ENCODE measurements at regions of chr11 and their contacts with region 1.

Region 1: GRCh38 chr11:122796128-122796717 is 42.1 kb upstream of the CRTAM start:
- DNase-seq: peak; percentile 55 to 85 (median 75)
- ATAC-seq: peak; percentile 100
- H3K4me3 ChIP-seq: no peak overlapping the region
- H3K4me3 Mint-ChIP-seq: no peak overlapping the region
- H3K27ac ChIP-seq: no peak overlapping the region
- H3K27ac Mint-ChIP-seq: no peak overlapping the region
- H3K4me1 ChIP-seq: no peaks in the 10 kb centered on the region
- H3K4me1 Mint-ChIP-seq: peaks cover 4% of the 10 kb centered on the region
- H3K27me3 ChIP-seq: no peaks in the 10 kb centered on the region
- H3K27me3 Mint-ChIP-seq: no peaks in the 10 kb centered on the region
- CTCF ChIP-seq: peak; percentile 96

Region 2: DNA sequence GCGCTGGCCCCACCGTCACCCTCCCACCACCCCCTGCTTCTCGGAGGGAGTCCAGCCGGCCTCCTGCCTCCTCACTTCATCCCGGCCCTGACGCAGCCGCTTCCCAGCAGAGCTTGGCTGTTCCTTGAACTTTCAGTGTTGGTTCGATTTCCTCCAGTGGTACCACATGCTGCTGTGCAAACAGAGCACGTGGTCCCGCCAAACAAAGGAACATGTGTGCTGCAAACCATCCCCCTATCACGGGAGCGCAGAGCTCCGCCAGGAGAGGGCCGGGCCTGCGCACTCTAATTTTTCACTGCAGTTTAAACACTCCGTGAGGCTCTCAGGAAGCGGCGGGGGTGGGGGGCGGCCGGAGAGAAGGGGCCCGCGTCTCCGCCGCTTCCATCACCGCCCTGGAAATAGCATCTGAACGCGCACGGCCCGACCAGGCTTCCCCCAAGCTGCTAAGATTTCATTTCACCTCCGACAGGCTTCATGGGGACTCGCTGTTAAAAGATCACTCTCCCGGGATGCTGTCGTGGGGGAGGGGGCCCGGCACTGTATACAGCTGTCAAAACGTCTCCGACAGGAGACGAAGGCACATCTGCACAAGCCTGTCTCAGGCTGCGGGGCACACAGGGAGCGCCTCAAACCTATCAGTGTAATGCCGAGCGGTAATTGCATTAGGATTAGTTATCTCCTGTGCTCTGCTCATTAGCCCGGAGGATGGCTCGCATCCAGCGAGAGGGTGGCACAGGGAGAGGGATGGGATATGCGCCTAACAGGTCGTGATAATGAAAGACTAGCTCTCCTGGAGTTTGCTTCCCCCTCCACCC is 1073.6 kb before region 1 on chr11:
- CTCF ChIA-PET with region 1: no interaction called
- POLR2A ChIA-PET with region 1: no interaction called
- intact Hi-C with region 1: no loop called
- DNase-seq: no peak
- ATAC-seq: no peak
- H3K4me3 ChIP-seq: no peak overlapping the region
- H3K4me3 Mint-ChIP-seq: no peak overlapping the region
- H3K27ac ChIP-seq: no peak overlapping the region
- H3K27ac Mint-ChIP-seq: no peak overlapping the region
- H3K4me1 ChIP-seq: peaks cover 5% of the 10 kb centered on the region
- H3K4me1 Mint-ChIP-seq: no peaks in the 10 kb centered on the region
- H3K27me3 ChIP-seq: peaks cover 0 to 5% of the 10 kb centered on the region in 2 experiments
- H3K27me3 Mint-ChIP-seq: peaks cover 15% of the 10 kb centered on the region
- CTCF ChIP-seq: no peak

Region 3: GRCh38 chr11:122781378-122782195 is 14.6 kb before region 1 on chr11:
- CTCF ChIA-PET with region 1: interaction called, 26 read pairs
- POLR2A ChIA-PET with region 1: no interaction called
- intact Hi-C with region 1: no loop called
- DNase-seq: peak; percentile 48 to 85 (median 76)
- ATAC-seq: peak; percentile 86
- H3K4me3 ChIP-seq: no peak overlapping the region
- H3K4me3 Mint-ChIP-seq: no peak overlapping the region
- H3K27ac ChIP-seq: no peak overlapping the region
- H3K27ac Mint-ChIP-seq: no peak overlapping the region
- H3K4me1 ChIP-seq: no peaks in the 10 kb centered on the region
- H3K4me1 Mint-ChIP-seq: peaks cover 2% of the 10 kb centered on the region
- H3K27me3 ChIP-seq: no peaks in the 10 kb centered on the region
- H3K27me3 Mint-ChIP-seq: no peaks in the 10 kb centered on the region
- CTCF ChIP-seq: peak; percentile 88

Region 4: DNA sequence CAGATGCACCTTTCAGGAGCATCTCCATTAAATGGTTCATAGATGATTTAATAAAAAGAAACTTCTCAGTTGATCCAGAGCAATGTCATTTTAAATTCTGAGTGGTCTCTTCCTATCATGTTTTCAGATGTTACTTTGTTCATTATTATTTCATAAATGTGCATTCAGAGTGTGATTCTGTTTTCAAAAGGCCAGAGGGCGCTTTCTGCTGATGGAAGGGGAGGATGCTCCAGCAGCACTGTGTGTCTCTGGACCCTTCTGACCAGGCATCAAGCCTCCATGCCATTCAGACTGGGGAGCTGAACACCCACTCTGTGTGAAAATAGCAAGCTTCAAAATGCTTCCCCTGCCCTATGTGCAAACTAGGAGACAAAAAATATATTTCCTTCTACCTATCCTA is 18.2 kb after region 1 on chr11:
- CTCF ChIA-PET with region 1: interaction called, 38 read pairs
- POLR2A ChIA-PET with region 1: no interaction called
- intact Hi-C with region 1: no loop called
- DNase-seq: peak in 3 of 9 experiments; percentile 10 to 57 (median 44)
- ATAC-seq: no peak
- H3K4me3 ChIP-seq: no peak overlapping the region
- H3K4me3 Mint-ChIP-seq: no peak overlapping the region
- H3K27ac ChIP-seq: no peak overlapping the region
- H3K27ac Mint-ChIP-seq: no peak overlapping the region
- H3K4me1 ChIP-seq: peaks cover 27% of the 10 kb centered on the region
- H3K4me1 Mint-ChIP-seq: peaks cover 49% of the 10 kb centered on the region
- H3K27me3 ChIP-seq: no peaks in the 10 kb centered on the region
- H3K27me3 Mint-ChIP-seq: no peaks in the 10 kb centered on the region
- CTCF ChIP-seq: peak; percentile 25

Region 5: DNA sequence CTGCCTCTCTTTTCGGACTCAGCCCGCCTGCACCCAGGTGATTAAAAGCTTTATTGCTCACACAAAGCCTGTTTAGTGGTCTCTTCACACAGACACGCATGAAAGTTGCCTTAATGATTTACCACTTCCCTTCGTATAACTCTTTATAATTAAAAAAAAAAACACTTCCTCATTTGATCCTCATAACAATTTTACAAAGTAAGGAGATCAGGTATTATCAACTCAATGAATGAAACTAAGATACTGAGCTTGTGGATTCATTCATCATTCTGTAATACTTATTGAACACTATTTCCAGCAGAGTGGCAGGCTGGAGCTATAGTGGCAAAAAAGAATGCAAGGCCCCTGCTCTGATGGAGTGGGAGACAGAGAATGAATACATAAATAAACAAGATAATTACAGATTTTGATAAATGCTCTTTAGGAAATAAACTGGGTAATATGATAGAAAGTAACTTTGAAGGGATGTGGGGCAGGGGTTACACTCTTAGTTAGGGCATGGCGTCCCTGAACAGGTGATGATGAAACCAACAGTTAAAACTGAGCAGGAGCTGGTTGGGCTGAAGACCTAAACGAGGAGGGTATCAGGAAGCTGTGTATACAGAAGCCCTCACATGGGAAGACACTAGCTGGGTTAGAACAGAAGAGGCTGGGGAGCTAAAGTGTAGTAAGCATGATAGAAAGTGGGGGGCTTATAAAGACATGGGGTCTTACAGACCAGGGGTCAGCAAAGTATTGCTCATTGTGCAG is 36.7 kb after region 1 on chr11:
- CTCF ChIA-PET with region 1: interaction called, 15 read pairs
- POLR2A ChIA-PET with region 1: interaction called, 6 read pairs
- intact Hi-C with region 1: loop called in 1 of 2 experiments (anchors 1 kb)
- DNase-seq: peak in 1 of 9 experiments; percentile 44
- ATAC-seq: peak; percentile 46
- H3K4me3 ChIP-seq: no peak overlapping the region
- H3K4me3 Mint-ChIP-seq: peak overlapping the region; percentile 12
- H3K27ac ChIP-seq: peak overlapping the region; percentile 7 to 42
- H3K27ac Mint-ChIP-seq: peak overlapping the region; percentile 70
- H3K4me1 ChIP-seq: peaks cover 15% of the 10 kb centered on the region
- H3K4me1 Mint-ChIP-seq: peaks cover 43% of the 10 kb centered on the region
- H3K27me3 ChIP-seq: no peaks in the 10 kb centered on the region
- H3K27me3 Mint-ChIP-seq: no peaks in the 10 kb centered on the region
- CTCF ChIP-seq: no peak

Region 6: DNA sequence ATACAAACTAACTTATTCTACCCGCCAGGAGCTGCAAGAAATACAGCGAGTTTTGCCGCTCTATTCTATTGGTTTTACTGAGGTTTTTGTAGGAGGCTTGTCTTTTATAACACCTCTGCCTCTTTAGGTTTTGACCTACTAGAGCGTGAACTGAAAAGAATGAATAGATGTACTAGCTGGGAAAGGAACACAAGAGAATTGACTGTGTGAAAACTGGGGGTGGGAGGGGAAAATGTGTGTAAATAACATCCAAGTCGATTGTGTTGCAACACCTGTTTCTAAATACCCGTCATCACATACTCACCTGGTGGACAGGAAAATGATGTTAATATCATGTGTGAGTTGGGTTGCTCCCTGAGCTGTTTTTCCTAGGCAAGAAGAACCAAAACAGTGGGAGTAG is 73.4 kb after region 1 on chr11:
- CTCF ChIA-PET with region 1: interaction called, 39 read pairs
- POLR2A ChIA-PET with region 1: no interaction called
- intact Hi-C with region 1: no loop called
- DNase-seq: no peak
- ATAC-seq: no peak
- H3K4me3 ChIP-seq: no peak overlapping the region
- H3K4me3 Mint-ChIP-seq: no peak overlapping the region
- H3K27ac ChIP-seq: no peak overlapping the region
- H3K27ac Mint-ChIP-seq: peak overlapping the region; percentile 66
- H3K4me1 ChIP-seq: no peaks in the 10 kb centered on the region
- H3K4me1 Mint-ChIP-seq: no peaks in the 10 kb centered on the region
- H3K27me3 ChIP-seq: no peaks in the 10 kb centered on the region
- H3K27me3 Mint-ChIP-seq: no peaks in the 10 kb centered on the region
- CTCF ChIP-seq: no peak

Region 7: DNA sequence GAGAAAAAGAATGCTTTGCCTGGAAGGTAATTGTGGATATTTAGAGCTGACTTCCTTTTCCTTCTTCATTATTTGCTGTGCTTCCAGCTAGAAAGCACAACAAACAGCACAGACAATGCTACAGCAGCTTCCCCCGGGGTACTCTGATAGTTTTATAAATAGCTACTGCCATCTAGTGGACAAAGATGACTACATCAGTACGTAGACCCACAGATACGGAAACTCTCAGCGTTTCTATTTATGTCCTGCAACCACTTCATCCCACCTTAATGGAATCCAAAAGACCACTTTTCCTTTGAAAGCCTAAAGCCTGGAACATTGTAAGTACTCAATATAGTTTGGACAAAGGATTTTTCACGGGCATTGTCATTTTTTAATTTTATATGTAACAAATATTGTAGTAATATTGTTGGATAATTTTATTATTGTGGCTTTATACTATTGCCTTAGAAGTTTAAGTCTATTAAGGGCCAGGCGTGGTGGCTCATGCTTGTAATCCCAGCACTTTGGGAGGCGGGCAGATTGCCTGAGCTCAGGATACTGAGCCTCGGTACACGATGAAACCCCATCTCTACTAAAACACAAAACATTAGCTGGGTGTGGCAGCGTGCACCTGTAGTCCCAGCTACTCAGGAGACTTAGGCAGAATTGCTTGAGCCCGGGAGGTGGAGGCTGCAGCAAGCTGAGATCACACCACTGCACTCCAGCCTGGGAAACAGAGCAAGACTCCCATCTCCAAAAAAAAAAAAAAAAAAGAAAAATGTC is 258.3 kb after region 1 on chr11:
- CTCF ChIA-PET with region 1: interaction called, 15 read pairs
- POLR2A ChIA-PET with region 1: no interaction called
- intact Hi-C with region 1: loop called (anchors 1 to 10 kb)
- DNase-seq: peak in 4 of 9 experiments; percentile 28 to 84 (median 56)
- ATAC-seq: peak; percentile 85
- H3K4me3 ChIP-seq: no peak overlapping the region
- H3K4me3 Mint-ChIP-seq: peak overlapping the region; percentile 67
- H3K27ac ChIP-seq: peak overlapping the region in 1 of 2 experiments; percentile 51
- H3K27ac Mint-ChIP-seq: peak overlapping the region; percentile 97
- H3K4me1 ChIP-seq: peaks cover 55% of the 10 kb centered on the region
- H3K4me1 Mint-ChIP-seq: peaks cover 57% of the 10 kb centered on the region
- H3K27me3 ChIP-seq: no peaks in the 10 kb centered on the region
- H3K27me3 Mint-ChIP-seq: no peaks in the 10 kb centered on the region
- CTCF ChIP-seq: peak; percentile 72

Measured in CD8-positive, alpha-beta T cell (primary cell).